HepG2 (cell line): ENCODE measurements at regions of chr15 and their contacts with region 1.

Region 1: DNA sequence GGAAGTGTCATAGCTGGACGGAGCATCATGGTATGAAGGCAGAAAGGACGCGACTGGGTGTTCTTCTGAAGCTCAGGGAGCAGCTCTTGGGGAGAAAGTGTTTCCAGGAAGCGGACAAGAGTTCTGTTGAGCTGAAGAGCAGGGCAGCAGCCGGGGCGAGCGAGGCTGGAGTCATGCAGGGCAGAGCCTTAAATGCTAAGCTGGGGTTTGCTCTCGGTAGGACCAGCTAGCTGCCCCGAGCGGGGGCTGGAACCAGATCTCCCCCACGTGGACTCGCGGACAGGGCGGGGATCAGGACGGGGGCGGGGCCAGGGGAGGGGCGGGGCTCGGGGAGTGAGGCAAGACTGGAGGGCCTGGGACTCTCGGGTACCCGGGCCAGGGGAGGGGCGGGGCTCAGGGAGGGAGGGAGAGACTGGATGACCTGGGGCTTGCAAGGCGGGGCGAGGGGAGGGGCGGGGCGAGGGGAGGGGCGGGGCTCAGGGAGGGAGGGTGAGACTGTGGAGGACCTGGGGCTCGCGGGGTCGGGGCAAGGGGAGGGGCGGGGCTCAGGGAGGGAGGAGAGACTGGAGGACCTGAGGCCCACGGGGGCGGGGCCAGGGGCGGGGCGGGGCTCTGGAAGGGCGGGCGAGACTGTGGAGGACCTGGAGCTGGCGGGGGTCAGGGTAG is 486 bp upstream of the FAH start:
- DNase-seq: peak; percentile 90
- ATAC-seq: peak; percentile 67
- H3K4me3 ChIP-seq: peak overlapping the region; percentile 64 to 89 (median 72)
- H3K27ac ChIP-seq: peak overlapping the region; percentile 48
- H3K4me1 ChIP-seq: peaks cover 57% of the 10 kb centered on the region
- H3K27me3 ChIP-seq: no peaks in the 10 kb centered on the region; a peak in 1 of 5 replicates
- CTCF ChIP-seq: no peak
- EP300 ChIP-seq: no peak
- POLR2A ChIP-seq: peak; percentile 35 to 69; a peak in 2 of 4 replicates
- RAD21 ChIP-seq: no peak

Region 2: GRCh38 chr15:79887054-79887915 is 265.0 kb before region 1 on chr15:
- CTCF ChIA-PET with region 1: no interaction called
- POLR2A ChIA-PET with region 1: no interaction called
- in situ Hi-C with region 1: loop called (anchors 25 kb)
- intact Hi-C with region 1: loop called (anchors 10 kb)
- DNase-seq: no peak
- ATAC-seq: no peak
- H3K4me3 ChIP-seq: no peak overlapping the region
- H3K27ac ChIP-seq: peak overlapping the region; percentile 60
- H3K4me1 ChIP-seq: peaks cover 95% of the 10 kb centered on the region
- H3K27me3 ChIP-seq: no peaks in the 10 kb centered on the region
- CTCF ChIP-seq: no peak
- EP300 ChIP-seq: no peak
- POLR2A ChIP-seq: no peak
- RAD21 ChIP-seq: no peak

Region 3: GRCh38 chr15:79896637-79897379 is 255.5 kb before region 1 on chr15 and contains the start of gene MTHFS:
- CTCF ChIA-PET with region 1: no interaction called
- POLR2A ChIA-PET with region 1: no interaction called
- in situ Hi-C with region 1: loop called (anchors 25 kb)
- intact Hi-C with region 1: no loop called
- DNase-seq: peak; percentile 66
- ATAC-seq: peak; percentile 96
- H3K4me3 ChIP-seq: peak within 1 kb of the TSS; percentile 85 to 88 (median 85)
- H3K27ac ChIP-seq: peak within 1 kb of the TSS; percentile 98
- H3K4me1 ChIP-seq: peaks cover 62% of the 10 kb centered on the region
- H3K27me3 ChIP-seq: no peaks in the 10 kb centered on the region; a peak in 1 of 5 replicates
- CTCF ChIP-seq: peak; percentile 77
- EP300 ChIP-seq: peak in 1 of 2 experiments; percentile 48; a peak in 1 of 4 replicates
- POLR2A ChIP-seq: peak; percentile 96 to 97
- RAD21 ChIP-seq: peak; percentile 80
- total RNA-seq, gene MTHFS: 37.0 and 52.4 TPM in 2 replicates

Region 4: GRCh38 chr15:80072285-80072994 is 79.9 kb before region 1 on chr15:
- CTCF ChIA-PET with region 1: no interaction called
- POLR2A ChIA-PET with region 1: no interaction called
- in situ Hi-C with region 1: loop called (anchors 5 kb)
- intact Hi-C with region 1: loop called (anchors 5 kb)
- DNase-seq: peak; percentile 91
- ATAC-seq: peak; percentile 93
- H3K4me3 ChIP-seq: peak overlapping the region; percentile 63 to 76 (median 68); a peak in 5 of 6 replicates
- H3K27ac ChIP-seq: peak overlapping the region; percentile 43
- H3K4me1 ChIP-seq: peaks cover 84% of the 10 kb centered on the region
- H3K27me3 ChIP-seq: no peaks in the 10 kb centered on the region
- CTCF ChIP-seq: no peak
- EP300 ChIP-seq: 0 out of 4 replicates have a peak, but pooled peaks of 1 of the 2 experiments have one; percentile 9
- POLR2A ChIP-seq: no peak
- RAD21 ChIP-seq: no peak